ENCODE measurements at regions of chr9 and their contacts with region 1.

Region 1: DNA sequence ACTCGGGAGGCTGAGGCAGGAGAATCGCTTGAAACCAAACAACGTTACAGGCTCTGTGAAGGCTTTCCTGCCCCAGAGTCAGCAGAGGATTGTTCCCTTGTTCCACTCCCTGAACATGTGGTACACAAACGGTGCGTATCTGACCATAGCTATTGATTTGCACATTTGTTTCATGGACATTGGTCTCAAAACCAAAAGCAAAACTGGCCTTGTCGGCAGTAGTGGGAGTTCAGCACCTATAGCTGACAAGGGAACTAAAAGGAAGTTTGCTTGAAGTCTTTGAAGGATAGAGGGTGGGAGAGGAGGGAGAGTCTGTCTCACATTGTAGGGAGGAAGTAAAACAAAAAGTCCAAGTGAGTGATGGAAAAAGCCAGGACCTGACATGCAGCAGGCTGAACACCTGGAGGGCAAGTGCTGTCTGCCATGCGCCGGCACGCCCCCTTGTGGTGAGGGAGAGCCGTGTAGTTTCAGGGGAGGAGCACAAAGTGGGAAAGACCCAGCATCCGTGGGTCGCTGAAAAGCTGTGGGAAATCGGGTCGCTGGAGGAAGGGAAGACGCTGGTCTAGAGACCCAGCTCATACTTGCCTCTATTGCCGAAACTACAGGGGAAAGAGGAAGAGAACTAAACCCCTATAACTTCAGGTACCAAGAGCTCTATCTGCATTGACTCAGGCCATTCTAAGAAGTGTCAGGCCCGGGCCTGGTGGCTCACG is 58.0 kb downstream of the RAD23B start:
- DNase-seq: peak; percentile 55 to 84 (median 73)
- ATAC-seq: peak; percentile 85
- H3K4me3 ChIP-seq: no peak overlapping the region
- H3K4me3 Mint-ChIP-seq: peak overlapping the region in 4 of 10 donors; percentile 4 to 38 (median 24)
- H3K27ac ChIP-seq: no peak overlapping the region
- H3K27ac Mint-ChIP-seq: peak overlapping the region in 4 of 9 donors; percentile 3 to 60 (median 38)
- H3K4me1 ChIP-seq: no peaks in the 10 kb centered on the region
- H3K4me1 Mint-ChIP-seq: peaks cover 4 to 21% (median 13%) of the 10 kb centered on the region in 7 donors
- H3K27me3 ChIP-seq: no peaks in the 10 kb centered on the region
- H3K27me3 Mint-ChIP-seq: no peaks in the 10 kb centered on the region

Region 2: DNA sequence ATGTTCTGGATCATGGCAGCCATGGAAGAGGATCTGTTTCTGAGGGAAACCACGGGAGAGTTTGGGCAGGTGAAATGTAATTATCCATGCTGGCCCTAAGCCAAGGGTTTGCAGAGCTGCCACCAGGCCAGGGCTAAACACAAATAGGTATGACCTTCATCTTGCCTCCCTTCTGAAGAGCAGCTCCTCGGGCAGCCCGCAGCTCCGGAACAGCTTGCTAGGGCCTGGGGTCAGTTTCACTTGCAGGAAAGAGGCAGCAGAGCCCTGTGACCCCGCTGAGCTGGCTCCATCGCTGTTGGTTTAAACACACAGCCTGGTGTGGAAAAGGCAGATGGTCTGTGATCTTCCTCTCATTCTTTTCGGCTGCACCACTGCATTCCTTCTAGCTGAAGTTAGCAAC is 1505.4 kb before region 1 on chr9:
- CTCF ChIA-PET with region 1: no interaction called
- POLR2A ChIA-PET with region 1: no interaction called
- intact Hi-C with region 1: no loop called
- DNase-seq: no peak
- ATAC-seq: no peak
- H3K4me3 ChIP-seq: no peak overlapping the region
- H3K4me3 Mint-ChIP-seq: no peak overlapping the region
- H3K27ac ChIP-seq: no peak overlapping the region
- H3K27ac Mint-ChIP-seq: peak overlapping the region in 1 of 9 donors; percentile 26
- H3K4me1 ChIP-seq: no peaks in the 10 kb centered on the region
- H3K4me1 Mint-ChIP-seq: no peaks in the 10 kb centered on the region
- H3K27me3 ChIP-seq: no peaks in the 10 kb centered on the region
- H3K27me3 Mint-ChIP-seq: no peaks in the 10 kb centered on the region

Region 3: DNA sequence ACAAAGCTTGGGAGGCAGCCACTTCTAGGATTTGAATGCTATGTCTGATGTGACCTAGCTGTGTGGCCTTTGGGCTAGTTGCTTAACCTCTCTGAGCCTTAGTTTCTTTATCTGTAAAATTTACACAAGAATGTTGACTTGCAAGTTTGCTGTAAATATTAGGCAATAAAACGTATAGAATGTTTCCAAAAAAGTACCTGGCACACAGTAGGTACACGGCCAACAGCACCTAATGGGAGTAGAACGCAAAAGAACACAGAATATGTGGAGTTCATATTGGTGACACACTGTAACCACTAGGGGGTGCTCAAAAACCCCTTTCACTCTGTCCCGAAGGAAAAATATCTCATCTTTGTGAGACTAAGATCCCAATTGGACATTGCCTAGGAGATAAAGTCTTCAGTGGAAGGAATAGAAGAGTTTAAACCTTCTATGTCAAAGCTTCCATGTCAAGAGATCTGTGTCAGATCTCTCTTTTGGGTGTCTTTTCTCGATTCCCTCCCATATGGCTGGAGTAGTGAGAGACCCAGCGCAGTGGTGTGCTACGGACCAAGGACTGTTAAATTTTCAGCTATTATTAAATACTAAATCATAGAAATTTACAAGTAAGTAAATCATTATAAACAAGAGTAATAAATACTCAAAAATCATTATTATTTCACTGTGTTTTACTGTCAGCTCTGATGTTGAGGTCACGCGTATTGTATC is 203.4 kb before region 1 on chr9:
- CTCF ChIA-PET with region 1: interaction called, 5 read pairs
- POLR2A ChIA-PET with region 1: no interaction called
- intact Hi-C with region 1: loop called (anchors 1 kb)
- DNase-seq: peak in 2 of 9 donors; percentile 2 to 10
- ATAC-seq: no peak
- H3K4me3 ChIP-seq: no peak overlapping the region
- H3K4me3 Mint-ChIP-seq: no peak overlapping the region
- H3K27ac ChIP-seq: no peak overlapping the region
- H3K27ac Mint-ChIP-seq: no peak overlapping the region
- H3K4me1 ChIP-seq: no peaks in the 10 kb centered on the region
- H3K4me1 Mint-ChIP-seq: no peaks in the 10 kb centered on the region
- H3K27me3 ChIP-seq: no peaks in the 10 kb centered on the region
- H3K27me3 Mint-ChIP-seq: peaks cover 9 to 26% (median 14%) of the 10 kb centered on the region in 5 donors

Region 4: GRCh38 chr9:107158321-107158720 is 182.8 kb before region 1 on chr9:
- CTCF ChIA-PET with region 1: no interaction called
- POLR2A ChIA-PET with region 1: no interaction called
- intact Hi-C with region 1: loop called in 1 of 2 experiments (anchors 1 kb)
- DNase-seq: no peak
- ATAC-seq: no peak
- H3K4me3 ChIP-seq: no peak overlapping the region
- H3K4me3 Mint-ChIP-seq: no peak overlapping the region
- H3K27ac ChIP-seq: no peak overlapping the region
- H3K27ac Mint-ChIP-seq: no peak overlapping the region
- H3K4me1 ChIP-seq: no peaks in the 10 kb centered on the region
- H3K4me1 Mint-ChIP-seq: no peaks in the 10 kb centered on the region
- H3K27me3 ChIP-seq: no peaks in the 10 kb centered on the region
- H3K27me3 Mint-ChIP-seq: peaks cover 0 to 16% (median 13%) of the 10 kb centered on the region in 5 donors

Region 5: DNA sequence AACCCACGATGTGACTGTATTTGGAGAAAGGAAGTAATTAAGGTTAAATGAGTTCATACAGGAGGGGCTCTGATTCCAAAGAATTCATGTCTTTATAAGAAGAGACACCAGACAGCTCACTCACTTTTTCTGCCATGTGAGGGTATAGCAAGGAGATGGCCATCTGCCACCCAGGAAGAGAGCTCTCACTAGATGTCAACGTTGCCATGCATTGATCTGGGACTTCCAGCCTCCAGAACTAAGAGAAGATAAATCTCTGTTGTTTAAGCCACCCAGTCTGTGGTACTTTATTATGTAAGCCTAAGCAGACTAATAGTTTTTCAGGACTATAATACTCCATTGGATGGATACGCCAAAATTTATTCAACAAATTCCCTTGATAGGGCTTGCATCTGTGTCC is 147.8 kb before region 1 on chr9:
- CTCF ChIA-PET with region 1: no interaction called
- POLR2A ChIA-PET with region 1: no interaction called
- intact Hi-C with region 1: loop called in 1 of 2 experiments (anchors 1 kb)
- DNase-seq: no peak
- ATAC-seq: no peak
- H3K4me3 ChIP-seq: no peak overlapping the region
- H3K4me3 Mint-ChIP-seq: no peak overlapping the region
- H3K27ac ChIP-seq: no peak overlapping the region
- H3K27ac Mint-ChIP-seq: no peak overlapping the region
- H3K4me1 ChIP-seq: no peaks in the 10 kb centered on the region
- H3K4me1 Mint-ChIP-seq: peaks cover 0 to 2% (median 0%) of the 10 kb centered on the region in 7 donors
- H3K27me3 ChIP-seq: no peaks in the 10 kb centered on the region
- H3K27me3 Mint-ChIP-seq: peaks cover 0 to 22% (median 11%) of the 10 kb centered on the region in 5 donors

Region 6: DNA sequence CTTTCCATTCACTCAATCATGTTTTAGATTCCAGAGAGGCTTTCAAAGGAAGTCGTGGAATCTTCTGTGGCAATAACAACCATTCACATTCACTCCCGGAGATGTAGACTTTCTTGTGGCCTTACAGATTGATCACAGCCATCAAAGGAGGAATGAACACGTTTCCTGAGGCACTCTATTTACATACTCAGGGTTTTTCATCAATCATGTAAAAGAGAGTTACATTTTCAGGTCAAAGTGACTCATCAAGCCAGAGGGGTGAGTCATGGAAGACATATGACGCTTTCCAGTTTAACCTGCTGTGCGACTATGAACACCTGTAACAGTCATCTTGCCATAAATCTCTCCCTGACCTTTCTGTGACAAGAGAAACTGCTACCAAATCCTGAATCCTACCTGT is 97.3 kb before region 1 on chr9:
- CTCF ChIA-PET with region 1: interaction called, 28 read pairs
- POLR2A ChIA-PET with region 1: no interaction called
- intact Hi-C with region 1: loop called (anchors 1 kb)
- DNase-seq: peak in 2 of 9 donors; percentile 8 to 28
- ATAC-seq: no peak
- H3K4me3 ChIP-seq: no peak overlapping the region
- H3K4me3 Mint-ChIP-seq: no peak overlapping the region
- H3K27ac ChIP-seq: no peak overlapping the region
- H3K27ac Mint-ChIP-seq: peak overlapping the region in 2 of 9 donors; percentile 2 to 43
- H3K4me1 ChIP-seq: no peaks in the 10 kb centered on the region
- H3K4me1 Mint-ChIP-seq: peaks cover 5 to 20% (median 12%) of the 10 kb centered on the region in 7 donors
- H3K27me3 ChIP-seq: no peaks in the 10 kb centered on the region
- H3K27me3 Mint-ChIP-seq: peaks cover 0 to 1% (median 0%) of the 10 kb centered on the region in 5 donors

Region 7: DNA sequence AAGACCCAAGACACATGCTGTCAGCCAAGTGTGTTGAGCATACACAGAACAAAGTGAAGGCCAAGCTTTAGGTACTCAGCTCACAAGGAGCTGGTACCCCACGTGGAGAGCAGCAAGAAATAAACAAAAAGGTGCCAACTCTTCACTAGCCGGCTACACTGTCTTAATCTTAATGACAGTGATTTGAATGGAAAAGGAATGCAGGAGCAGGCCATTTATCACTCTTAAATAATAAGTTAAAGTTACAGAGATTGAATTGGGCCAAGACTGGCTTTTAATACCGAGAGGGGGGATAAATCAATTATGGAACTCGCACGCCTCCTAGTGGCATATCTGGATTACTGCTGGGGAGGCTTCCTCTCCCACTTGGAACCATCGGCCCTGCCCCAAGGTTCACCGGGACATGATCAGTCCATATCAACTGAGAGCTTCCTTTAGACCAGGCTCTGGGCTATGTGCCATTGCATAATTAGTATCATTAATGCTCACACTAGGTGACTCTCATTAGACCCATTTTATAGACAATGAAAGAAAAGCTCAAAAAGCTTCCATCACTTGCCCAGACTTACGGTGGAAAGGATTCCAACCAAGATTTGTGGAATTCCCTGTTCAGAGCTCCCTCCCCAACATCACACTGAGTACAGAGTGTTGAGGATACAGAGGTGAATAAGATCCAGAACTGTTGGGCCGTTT is 1420.7 kb after region 1 on chr9:
- CTCF ChIA-PET with region 1: no interaction called
- POLR2A ChIA-PET with region 1: no interaction called
- intact Hi-C with region 1: loop called in 1 of 2 experiments (anchors 5 kb)
- DNase-seq: peak in 2 of 9 donors; percentile 4 to 13
- ATAC-seq: peak; percentile 49
- H3K4me3 ChIP-seq: no peak overlapping the region
- H3K4me3 Mint-ChIP-seq: no peak overlapping the region
- H3K27ac ChIP-seq: no peak overlapping the region
- H3K27ac Mint-ChIP-seq: no peak overlapping the region
- H3K4me1 ChIP-seq: no peaks in the 10 kb centered on the region
- H3K4me1 Mint-ChIP-seq: no peaks in the 10 kb centered on the region
- H3K27me3 ChIP-seq: no peaks in the 10 kb centered on the region
- H3K27me3 Mint-ChIP-seq: peaks cover 0 to 7% (median 5%) of the 10 kb centered on the region in 5 donors

Measured in naive thymus-derived CD4-positive, alpha-beta T cell (primary cell).